Activated CD8-positive, alpha-beta memory T cell treated with anti-CD3 and anti-CD28 coated beads, Interleukin-2, amount 10 ng/mL, durations not matched to agents 7 days and 5 days (primary cell): ENCODE measurements at regions of chr3 and their contacts with region 1.

Region 1: GRCh38 chr3:167673221-167673620 is 19.5 kb upstream of the WDR49 start:
- DNase-seq: no peak
- ATAC-seq: no peak
- H3K4me3 Mint-ChIP-seq: no peak overlapping the region
- H3K27ac Mint-ChIP-seq: no peak overlapping the region
- H3K4me1 Mint-ChIP-seq: no peaks in the 10 kb centered on the region
- H3K27me3 Mint-ChIP-seq: no peaks in the 10 kb centered on the region

Region 2: DNA sequence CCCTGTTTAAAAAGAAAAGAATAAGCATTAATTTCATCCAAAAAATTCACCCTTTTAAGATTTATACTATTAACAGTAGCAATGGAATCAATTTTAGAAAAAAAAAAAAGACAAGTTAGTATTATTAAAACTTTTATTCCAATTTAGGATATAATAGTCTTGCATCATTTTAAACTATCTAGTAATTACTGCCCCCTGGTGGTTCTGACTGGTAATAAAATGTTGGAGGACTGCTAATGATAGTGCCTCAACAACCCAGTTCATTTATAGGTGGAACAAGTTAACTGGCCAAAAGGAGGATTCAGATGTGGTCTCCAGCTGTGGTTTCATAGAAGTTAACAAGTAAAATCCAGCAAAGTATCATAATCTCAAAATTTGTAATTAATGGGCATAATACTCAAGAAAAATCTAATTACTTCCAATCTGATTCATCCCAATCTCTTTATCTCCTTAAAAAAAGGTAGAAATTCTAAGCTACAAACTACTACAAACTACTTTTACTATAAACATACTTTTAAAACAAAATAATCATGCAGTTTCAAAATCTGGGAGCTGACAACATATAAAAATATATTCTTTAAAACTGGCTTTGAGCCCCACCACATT is 11.3 kb after region 1 on chr3:
- CTCF ChIA-PET with region 1: interaction called, 10 read pairs
- DNase-seq: peak; percentile 55
- ATAC-seq: peak; percentile 68
- H3K4me3 Mint-ChIP-seq: no peak overlapping the region
- H3K27ac Mint-ChIP-seq: no peak overlapping the region
- H3K4me1 Mint-ChIP-seq: peaks cover 3% of the 10 kb centered on the region
- H3K27me3 Mint-ChIP-seq: no peaks in the 10 kb centered on the region